ENCODE measurements at regions of chr17 and their contacts with region 1.

Region 1: GRCh38 chr17:74864866-74865395 is 5.2 kb upstream of the GRIN2C start:
- DNase-seq: peak; percentile 79 to 92
- ATAC-seq: peak; percentile 80
- H3K4me3 ChIP-seq: no peak overlapping the region
- H3K27ac ChIP-seq: no peak overlapping the region
- H3K4me1 ChIP-seq: no peaks in the 10 kb centered on the region
- H3K27me3 ChIP-seq: no peaks in the 10 kb centered on the region

Region 2: DNA sequence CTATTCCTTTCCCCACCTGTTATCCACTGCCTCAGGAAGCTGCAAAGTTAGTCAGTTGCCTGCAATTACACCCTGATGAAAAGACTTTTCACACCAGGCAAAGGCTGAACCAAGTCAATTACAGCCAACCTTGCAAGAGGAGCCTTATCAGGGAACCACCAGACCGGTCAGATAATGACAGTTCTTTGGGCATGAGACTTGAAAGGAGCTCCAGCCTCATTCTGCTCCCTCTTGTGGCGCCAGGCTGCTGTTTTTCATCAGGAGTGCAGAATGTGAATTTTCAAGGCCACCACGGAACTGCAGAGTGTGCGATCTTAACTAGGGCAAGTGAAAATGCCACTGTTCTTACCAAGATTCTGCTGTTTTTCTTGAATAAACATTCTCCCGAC is 568.4 kb before region 1 on chr17:
- intact Hi-C with region 1: no loop called
- DNase-seq: peak in 1 of 2 donors; percentile 71
- ATAC-seq: no peak
- H3K4me3 ChIP-seq: no peak overlapping the region
- H3K27ac ChIP-seq: no peak overlapping the region
- H3K4me1 ChIP-seq: no peaks in the 10 kb centered on the region
- H3K27me3 ChIP-seq: no peaks in the 10 kb centered on the region

Region 3: GRCh38 chr17:74748529-74749365 is 116.2 kb before region 1 on chr17 and contains the start of gene NHERF1:
- intact Hi-C with region 1: loop called (anchors 2 kb)
- DNase-seq: peak; percentile 96 to 98
- ATAC-seq: peak; percentile 95
- H3K4me3 ChIP-seq: peak within 1 kb of the TSS; percentile 73 to 82
- H3K27ac ChIP-seq: peak within 1 kb of the TSS in 1 of 2 donors; percentile 53
- H3K4me1 ChIP-seq: no peaks in the 10 kb centered on the region
- H3K27me3 ChIP-seq: no peaks in the 10 kb centered on the region
- total RNA-seq, gene NHERF1: 17.6 to 21.1 TPM

Region 4: DNA sequence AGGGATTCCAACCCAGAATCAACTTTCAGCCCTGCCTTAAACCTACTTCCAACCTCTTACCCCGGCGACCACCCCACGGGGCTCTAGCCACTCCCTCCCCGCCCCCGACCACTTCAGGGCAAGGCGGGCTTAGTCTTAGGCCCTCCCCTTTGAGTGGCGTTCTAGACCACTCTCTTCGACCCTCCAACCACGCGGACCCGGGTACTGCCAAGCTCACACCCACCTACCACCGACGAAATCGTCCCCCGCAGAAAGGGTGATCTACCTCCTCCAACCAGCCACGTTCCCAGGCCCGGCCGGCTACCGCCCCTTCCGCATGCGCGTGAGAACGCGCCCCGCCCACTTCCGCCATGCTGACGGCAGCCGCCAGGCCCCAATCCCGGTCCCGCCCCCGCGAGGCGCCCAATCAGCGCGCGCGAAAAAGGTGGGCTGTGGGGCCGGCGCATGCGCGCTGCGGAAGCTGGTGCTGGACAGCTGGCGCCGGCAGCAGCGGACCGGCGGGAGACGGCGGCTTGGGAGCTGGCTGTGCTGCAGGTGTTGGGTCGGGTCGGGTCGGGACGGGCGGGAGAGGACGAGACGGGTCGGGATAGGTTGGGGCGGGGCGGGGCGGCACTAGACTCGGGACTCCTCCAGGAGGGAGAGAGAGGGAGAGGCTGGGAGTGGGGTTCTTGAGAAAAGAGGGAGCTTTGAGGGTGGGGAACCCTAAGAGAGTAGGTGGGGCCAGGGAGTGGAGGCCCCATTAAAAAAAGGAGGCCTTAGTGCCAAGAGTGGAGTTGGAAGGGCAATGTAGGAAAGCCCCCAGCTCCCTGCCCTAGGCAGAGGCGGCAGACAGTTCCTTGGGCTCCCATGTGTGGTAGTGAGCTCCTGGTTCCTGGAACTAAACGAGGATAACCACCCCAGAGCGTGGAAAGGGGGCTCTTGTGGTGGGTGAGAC is 88.6 kb before region 1 on chr17 and contains the start of gene NAT9:
- intact Hi-C with region 1: loop called in 1 of 2 experiments (anchors 5 kb)
- DNase-seq: peak; percentile 99 to 100
- ATAC-seq: peak; percentile 98
- H3K4me3 ChIP-seq: peak within 1 kb of the TSS; percentile 69 to 71
- H3K27ac ChIP-seq: no peak within 1 kb of the TSS
- H3K4me1 ChIP-seq: no peaks in the 10 kb centered on the region
- H3K27me3 ChIP-seq: no peaks in the 10 kb centered on the region
- total RNA-seq, gene NAT9: 44.5 to 46.3 TPM

Region 5: GRCh38 chr17:74790161-74791054 is 74.5 kb before region 1 on chr17:
- intact Hi-C with region 1: loop called in 1 of 2 experiments (anchors 5 kb)
- DNase-seq: no peak
- ATAC-seq: no peak
- H3K4me3 ChIP-seq: no peak overlapping the region
- H3K27ac ChIP-seq: no peak overlapping the region
- H3K4me1 ChIP-seq: no peaks in the 10 kb centered on the region
- H3K27me3 ChIP-seq: no peaks in the 10 kb centered on the region